Activated CD8-positive, alpha-beta T cell treated with anti-CD3 and anti-CD28 coated beads, Interleukin-2, amount 10 ng/mL, durations not matched to agents 7 days and 5 days (primary cell): ENCODE measurements at regions of chr12 and their contacts with region 1.

Region 1: DNA sequence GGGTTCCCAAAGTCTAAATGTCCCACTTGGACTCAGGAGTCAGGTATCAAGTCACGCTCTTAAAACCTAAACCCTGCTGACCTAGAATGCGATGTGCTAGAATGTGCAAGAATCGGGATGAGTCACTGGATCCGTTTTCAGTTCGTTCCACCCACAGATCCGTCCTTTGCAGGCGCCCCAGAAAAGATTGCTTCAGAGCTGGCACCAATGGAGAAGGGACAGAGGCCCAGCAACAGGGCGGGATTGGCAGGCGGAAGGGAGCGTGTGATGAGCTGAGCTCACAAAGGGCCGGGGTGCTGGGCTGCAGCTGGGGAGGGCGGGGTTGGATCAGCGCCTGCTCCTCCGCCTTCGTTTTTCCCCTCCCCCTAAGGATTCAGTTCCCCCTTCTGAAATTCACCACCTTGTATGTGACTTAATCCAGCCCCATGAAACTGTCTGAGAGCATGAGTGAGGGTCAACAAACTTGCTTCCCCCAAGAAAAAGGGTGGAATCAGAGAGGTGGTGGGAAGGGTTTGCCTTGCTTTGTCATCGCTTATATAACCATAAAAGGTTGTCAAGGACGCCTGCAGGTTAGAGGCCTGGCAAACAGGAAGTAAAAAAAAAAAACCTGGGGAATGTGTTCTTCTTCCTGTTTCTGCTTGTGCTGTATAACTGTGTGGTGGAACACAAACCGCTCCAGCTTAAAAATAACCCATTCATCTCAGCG is 2.8 kb upstream of the UBC start:
- DNase-seq: peak; percentile 97
- ATAC-seq: peak; percentile 74
- H3K4me3 Mint-ChIP-seq: peak overlapping the region; percentile 99
- H3K27ac Mint-ChIP-seq: peak overlapping the region; percentile 98
- H3K4me1 Mint-ChIP-seq: peaks cover 83% of the 10 kb centered on the region
- H3K27me3 Mint-ChIP-seq: no peaks in the 10 kb centered on the region

Region 2: GRCh38 chr12:124745891-124746570 is 171.3 kb before region 1 on chr12:
- CTCF ChIA-PET with region 1: no interaction called
- POLR2A ChIA-PET with region 1: no interaction called
- DNase-seq: no peak
- ATAC-seq: no peak
- H3K4me3 Mint-ChIP-seq: no peak overlapping the region
- H3K27ac Mint-ChIP-seq: no peak overlapping the region
- H3K4me1 Mint-ChIP-seq: peaks cover 25% of the 10 kb centered on the region
- H3K27me3 Mint-ChIP-seq: peaks cover 37% of the 10 kb centered on the region

Region 3: DNA sequence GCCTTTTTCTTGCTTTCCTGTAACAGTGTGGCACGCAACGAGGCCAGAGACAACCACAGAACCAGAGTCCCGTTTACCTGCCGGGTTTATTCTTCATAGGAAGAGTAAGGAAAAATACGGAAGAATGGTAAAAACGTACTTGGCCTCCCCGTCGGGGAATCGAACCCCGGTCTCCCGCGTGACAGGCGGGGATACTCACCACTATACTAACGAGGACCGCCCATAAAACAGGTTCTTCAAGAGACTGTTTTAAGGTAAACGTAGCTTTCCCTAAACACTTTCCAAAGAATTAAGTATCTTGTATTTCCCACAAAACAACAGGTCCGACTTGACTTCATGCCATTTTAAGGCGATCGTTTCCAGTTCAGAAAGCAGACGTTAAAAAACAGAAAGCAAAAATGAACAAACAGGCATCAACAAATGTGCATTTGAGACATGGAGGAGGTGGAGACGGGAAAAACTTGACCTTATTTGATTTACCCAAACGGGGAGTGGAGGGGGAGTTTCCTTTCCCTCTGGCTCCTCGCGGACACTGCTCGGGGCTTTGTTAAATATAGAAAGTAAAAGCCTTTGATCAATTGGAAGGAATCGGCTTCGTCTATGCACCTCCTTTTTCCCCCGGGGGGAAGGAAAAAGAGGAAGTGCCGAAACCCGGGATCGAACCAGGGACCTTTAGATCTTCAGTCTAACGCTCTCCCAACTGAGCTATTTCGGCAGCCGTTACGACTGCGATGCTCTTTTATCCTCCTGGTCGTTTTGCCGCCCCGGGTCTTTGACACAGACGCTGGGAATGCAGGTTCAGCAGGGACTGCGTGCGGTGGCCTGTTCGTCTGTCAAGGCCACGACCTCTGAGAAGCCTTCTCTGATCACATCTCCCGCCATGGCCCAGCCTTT is 10.2 kb after region 1 on chr12:
- CTCF ChIA-PET with region 1: interaction called, 28 read pairs
- POLR2A ChIA-PET with region 1: interaction called, 35 read pairs
- DNase-seq: peak; percentile 95
- ATAC-seq: peak; percentile 88
- H3K4me3 Mint-ChIP-seq: peak overlapping the region; percentile 86
- H3K27ac Mint-ChIP-seq: peak overlapping the region; percentile 93
- H3K4me1 Mint-ChIP-seq: peaks cover 40% of the 10 kb centered on the region
- H3K27me3 Mint-ChIP-seq: peaks cover 4% of the 10 kb centered on the region

Region 4: GRCh38 chr12:124992874-124993625 is 75.8 kb after region 1 on chr12:
- CTCF ChIA-PET with region 1: interaction called, 4 read pairs
- POLR2A ChIA-PET with region 1: interaction called, 13 read pairs
- DNase-seq: peak; percentile 92
- ATAC-seq: peak; percentile 58
- H3K4me3 Mint-ChIP-seq: peak overlapping the region; percentile 78
- H3K27ac Mint-ChIP-seq: peak overlapping the region; percentile 84
- H3K4me1 Mint-ChIP-seq: peaks cover 35% of the 10 kb centered on the region
- H3K27me3 Mint-ChIP-seq: no peaks in the 10 kb centered on the region